ENCODE measurements at regions of chr22 and their contacts with region 1.

Region 1: GRCh38 chr22:35838855-35839576 is 121.3 kb downstream of the APOL5 start:
- DNase-seq: peak; percentile 95

Region 2: GRCh38 chr22:35611891-35612576 is 227.0 kb before region 1 on chr22:
- in situ Hi-C with region 1: no loop called
- DNase-seq: no peak

Region 3: GRCh38 chr22:35795476-35795875 is 43.5 kb before region 1 on chr22:
- in situ Hi-C with region 1: loop called (anchors 5 kb)
- DNase-seq: no peak